ENCODE measurements at regions of chr7 and their contacts with region 1.

Region 1: DNA sequence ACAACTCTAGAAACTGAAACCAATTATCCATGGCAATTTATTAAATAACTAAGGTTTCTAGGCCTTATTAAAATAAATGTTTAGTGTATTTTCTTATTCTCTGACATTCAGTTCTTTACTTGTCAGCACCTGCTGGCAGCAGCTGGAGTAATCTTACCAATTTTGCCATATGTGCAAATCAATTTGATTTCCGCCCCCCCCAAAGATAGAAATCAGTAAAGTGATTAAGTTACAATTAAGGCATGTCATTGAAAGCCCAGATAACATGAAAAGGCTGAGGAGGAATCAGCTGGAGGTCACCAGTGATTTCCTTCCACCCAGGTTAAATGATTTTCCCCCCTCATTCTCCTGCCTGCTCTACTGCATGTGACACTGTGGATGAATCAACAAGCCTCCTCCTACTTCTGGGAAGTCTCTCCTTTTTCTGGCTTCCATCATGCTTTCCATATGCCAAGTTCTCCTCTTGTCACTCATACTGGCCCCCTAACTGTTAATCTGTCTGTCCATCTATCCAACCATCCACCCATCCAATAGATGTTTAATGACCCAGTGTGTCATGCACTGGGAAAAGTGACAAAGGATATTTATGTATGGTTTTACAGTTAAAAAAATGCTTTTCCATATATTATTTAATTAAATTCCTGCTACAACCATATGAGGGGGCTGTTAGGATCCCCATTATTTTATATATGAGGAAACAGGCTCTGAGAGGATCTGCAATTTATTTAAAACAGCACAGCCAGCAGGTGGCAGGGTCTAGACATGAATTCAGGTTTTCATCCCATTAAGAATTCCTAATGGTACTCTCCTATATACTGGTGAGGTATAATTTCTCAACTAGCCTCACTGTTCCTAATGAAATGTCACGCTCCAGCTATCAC is 116.5 kb downstream of the ATXN7L1 start:
- DNase-seq: peak; percentile 18 to 36
- ATAC-seq: peak in 5 of 8 donors; percentile 38 to 73 (median 66)
- H3K4me3 ChIP-seq: no peak overlapping the region
- H3K27ac ChIP-seq: no peak overlapping the region
- H3K4me1 ChIP-seq: peaks cover 0 to 19% (median 0%) of the 10 kb centered on the region in 9 donors
- H3K27me3 ChIP-seq: no peaks in the 10 kb centered on the region
- CTCF ChIP-seq: peak; percentile 41 to 73 (median 66)

Region 2: DNA sequence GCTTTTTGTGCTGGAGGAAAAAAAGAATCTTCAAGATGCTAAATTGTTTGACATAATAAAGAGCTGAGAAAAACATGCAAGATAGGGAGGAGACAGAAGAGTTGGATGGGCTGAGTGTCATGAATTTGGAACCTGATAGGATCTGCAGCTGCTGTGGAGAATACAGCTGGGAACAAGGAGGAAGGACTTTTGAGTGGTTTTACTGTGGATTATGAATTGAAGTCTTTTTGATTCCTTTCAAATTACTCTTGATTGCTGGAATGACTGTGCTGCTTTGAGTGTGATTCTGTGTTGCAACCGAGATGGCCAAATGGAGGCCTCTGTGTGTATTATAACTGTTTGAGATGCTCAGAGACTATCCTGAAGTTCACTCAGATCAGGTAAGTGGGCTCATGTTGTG is 182.7 kb before region 1 on chr7:
- intact Hi-C with region 1: no loop called
- DNase-seq: no peak
- ATAC-seq: no peak
- H3K4me3 ChIP-seq: no peak overlapping the region
- H3K27ac ChIP-seq: no peak overlapping the region
- H3K4me1 ChIP-seq: peaks cover 0 to 8% (median 5%) of the 10 kb centered on the region in 9 donors
- H3K27me3 ChIP-seq: peaks cover 0 to 8% (median 3%) of the 10 kb centered on the region in 7 donors
- CTCF ChIP-seq: no peak

Region 3: DNA sequence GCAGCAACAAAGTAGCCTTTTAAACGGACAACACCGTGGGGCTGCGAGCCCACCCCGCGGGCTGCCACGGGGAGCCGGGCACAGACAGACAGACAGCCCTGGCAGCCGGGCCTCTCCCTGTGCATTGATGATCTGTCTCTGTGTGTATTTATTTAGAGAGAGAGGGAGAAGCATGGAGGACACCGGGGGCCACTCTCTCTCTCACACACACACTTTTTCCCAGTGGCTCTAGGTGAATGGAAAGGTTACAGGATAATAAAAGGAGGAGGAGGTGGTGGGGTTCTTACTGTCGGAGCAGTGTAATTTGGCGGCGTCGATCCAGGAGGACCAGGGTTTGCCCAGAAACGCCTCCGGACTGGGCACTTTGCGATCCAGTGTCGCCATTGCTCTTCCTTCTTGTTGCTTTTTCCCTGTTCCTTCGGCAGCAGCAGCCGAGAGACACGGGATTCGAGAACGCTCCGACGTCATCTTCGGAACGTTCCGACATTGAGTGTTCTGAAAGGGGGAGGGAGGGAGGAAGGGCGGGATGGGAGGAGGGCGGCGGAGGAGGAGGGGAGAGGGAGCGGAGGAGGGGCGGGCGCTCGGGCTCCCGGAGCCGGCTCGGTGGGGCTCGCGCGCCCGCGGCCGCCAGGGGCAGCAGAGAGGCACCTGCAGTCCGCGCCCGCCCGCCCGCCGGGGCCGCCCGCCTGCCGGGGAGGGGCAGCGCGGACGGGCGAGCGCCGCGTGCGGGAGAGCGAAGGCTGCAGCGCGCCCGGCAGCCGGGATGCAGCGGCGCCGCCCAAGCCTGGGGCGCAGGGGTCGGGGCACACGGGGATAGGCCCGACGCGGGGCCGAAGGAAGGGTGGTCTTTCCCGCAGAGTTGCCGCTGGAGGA is 116.4 kb after region 1 on chr7 and contains the start of gene ATXN7L1:
- intact Hi-C with region 1: loop called in 5 of 10 experiments (anchors 1 to 10 kb)
- DNase-seq: peak; percentile 94 to 95
- ATAC-seq: peak; percentile 95 to 98 (median 96)
- H3K4me3 ChIP-seq: peak within 1 kb of the TSS; percentile 67 to 98 (median 80)
- H3K27ac ChIP-seq: peak within 1 kb of the TSS; percentile 34 to 92 (median 78)
- H3K4me1 ChIP-seq: peaks cover 0 to 34% (median 11%) of the 10 kb centered on the region in 9 donors
- H3K27me3 ChIP-seq: peaks cover 0 to 18% (median 0%) of the 10 kb centered on the region in 7 donors
- CTCF ChIP-seq: peak; percentile 29 to 89 (median 58)
- total RNA-seq, gene ATXN7L1: 3.1 to 7.2 (median 5.6) TPM

Region 4: DNA sequence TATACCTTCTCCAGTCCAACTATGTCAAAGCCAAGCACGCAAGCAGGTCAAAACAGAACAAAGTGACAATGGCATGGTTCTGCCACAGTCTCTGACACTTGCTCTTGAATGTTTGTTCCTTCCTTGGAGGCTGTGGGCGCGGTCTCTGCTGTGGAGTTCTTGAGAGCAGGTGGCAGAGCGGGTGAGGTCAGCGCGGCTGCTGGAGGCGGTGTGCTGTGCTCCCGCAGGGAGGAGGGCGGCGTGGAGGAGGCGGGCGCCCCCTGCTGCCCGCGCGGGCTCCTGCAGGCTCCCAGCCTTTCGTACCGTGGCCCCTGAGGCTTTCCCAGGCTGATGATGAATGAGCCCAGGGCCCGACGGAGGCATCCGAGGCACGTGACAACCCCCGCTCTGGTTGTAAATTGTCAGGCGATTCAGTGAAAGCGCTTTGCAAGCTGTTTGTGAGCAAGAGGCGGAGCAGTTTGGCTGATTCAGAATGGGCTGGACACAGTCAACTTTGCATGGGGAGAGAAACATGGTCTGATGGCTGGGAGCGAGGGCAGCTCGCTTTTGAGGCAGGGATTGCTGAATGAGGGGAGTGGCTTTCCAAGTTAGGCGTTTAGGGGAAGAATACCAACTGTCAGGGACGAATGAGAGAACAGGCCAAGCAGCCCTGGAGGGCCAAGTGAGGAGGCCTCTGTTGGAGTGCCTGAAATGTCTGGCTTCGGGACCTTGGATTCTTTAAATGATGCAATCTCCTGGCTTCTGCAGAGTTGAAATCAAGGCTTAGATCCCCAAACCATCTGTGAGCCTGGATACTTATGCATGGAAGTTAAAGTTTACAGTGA is 249.7 kb after region 1 on chr7:
- intact Hi-C with region 1: loop called in 9 of 10 experiments (anchors 1 to 10 kb)
- DNase-seq: peak; percentile 57 to 78
- ATAC-seq: peak; percentile 93 to 98 (median 96)
- H3K4me3 ChIP-seq: peak overlapping the region in 1 of 10 donors; percentile 2
- H3K27ac ChIP-seq: peak overlapping the region in 1 of 10 donors; percentile 6
- H3K4me1 ChIP-seq: peaks cover 0 to 16% (median 5%) of the 10 kb centered on the region in 9 donors
- H3K27me3 ChIP-seq: peaks cover 0 to 3% (median 0%) of the 10 kb centered on the region in 7 donors
- CTCF ChIP-seq: peak; percentile 93 to 98 (median 96)

Region 5: DNA sequence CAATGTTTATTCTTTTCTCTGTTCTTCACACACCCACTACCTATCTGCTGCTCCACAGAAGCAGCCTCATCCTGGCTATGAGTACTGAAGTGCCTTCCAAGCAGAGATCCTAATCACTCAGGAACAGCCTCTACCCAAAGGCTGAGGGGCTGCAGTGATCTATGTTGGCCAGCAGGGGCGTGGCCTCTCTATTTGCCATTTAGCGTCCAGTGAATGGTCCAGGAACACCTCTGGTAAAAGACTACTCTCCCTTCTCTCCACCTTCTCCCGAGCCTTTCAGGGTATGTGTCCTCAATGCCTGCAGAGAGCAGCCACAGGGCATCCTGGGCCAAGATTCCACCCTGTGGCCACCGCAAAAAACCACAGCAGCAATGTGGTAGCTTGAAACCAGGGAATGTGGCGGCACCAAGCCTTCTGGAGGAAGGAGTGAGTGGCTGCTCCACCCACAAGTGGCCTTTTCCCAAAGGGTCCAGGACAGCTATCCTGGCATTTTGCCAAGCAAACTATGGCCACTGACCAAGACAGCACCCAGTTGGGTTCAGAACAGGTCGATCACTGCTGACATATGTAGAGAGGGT is 281.3 kb after region 1 on chr7:
- intact Hi-C with region 1: loop called (anchors 1 to 10 kb)
- DNase-seq: no peak
- ATAC-seq: peak in 2 of 8 donors; percentile 23 to 26
- H3K4me3 ChIP-seq: no peak overlapping the region
- H3K27ac ChIP-seq: no peak overlapping the region
- H3K4me1 ChIP-seq: peaks cover 0 to 21% (median 8%) of the 10 kb centered on the region in 9 donors
- H3K27me3 ChIP-seq: peaks cover 0 to 19% (median 0%) of the 10 kb centered on the region in 7 donors
- CTCF ChIP-seq: peak; percentile 34 to 78 (median 66)

Region 6: GRCh38 chr7:106153891-106154449 is 394.1 kb after region 1 on chr7:
- intact Hi-C with region 1: loop called in 4 of 10 experiments (anchors 5 to 10 kb)
- DNase-seq: peak; percentile 82 to 85
- ATAC-seq: peak; percentile 92 to 99 (median 96)
- H3K4me3 ChIP-seq: peak overlapping the region in 2 of 10 donors; percentile 2 to 23
- H3K27ac ChIP-seq: no peak overlapping the region
- H3K4me1 ChIP-seq: peaks cover 0 to 17% (median 10%) of the 10 kb centered on the region in 9 donors
- H3K27me3 ChIP-seq: peaks cover 0 to 51% (median 0%) of the 10 kb centered on the region in 7 donors
- CTCF ChIP-seq: peak; percentile 91 to 98 (median 96)

Region 7: DNA sequence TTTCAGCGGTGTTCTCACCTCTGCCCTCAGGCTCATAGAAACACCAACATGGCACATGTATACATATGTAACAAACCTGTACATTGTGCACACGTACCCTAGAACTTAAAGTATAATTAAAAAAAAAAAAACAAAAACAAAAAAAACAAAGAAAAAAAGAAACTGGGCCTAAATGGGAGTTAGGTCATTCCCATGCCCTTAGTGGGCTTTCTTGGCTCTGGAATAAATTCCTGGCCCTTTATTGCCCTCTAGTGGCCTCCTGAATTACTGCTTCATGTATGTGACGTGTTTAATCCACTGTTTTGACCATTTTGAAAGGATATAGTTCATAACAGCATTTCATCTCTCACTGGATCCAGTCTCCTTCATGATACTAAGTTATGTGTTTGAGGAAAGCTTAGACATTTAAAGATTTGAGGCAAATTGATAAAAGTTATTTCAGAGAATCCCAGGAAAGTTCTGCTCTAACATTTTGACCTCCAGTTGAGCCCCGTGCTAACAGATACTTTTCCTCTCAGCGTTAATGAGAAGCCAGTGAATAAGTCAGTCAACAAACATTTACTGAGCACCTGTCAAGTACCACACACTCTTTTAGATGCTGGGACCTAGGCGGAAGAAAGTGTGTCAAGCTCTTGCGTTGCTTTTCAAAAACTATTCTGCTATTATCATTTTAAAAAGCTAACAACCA is 406.9 kb after region 1 on chr7:
- intact Hi-C with region 1: loop called in 3 of 10 experiments (anchors 10 kb)
- DNase-seq: peak in 1 of 2 donors; percentile 75
- ATAC-seq: peak in 7 of 8 donors; percentile 59 to 88 (median 78)
- H3K4me3 ChIP-seq: no peak overlapping the region
- H3K27ac ChIP-seq: peak overlapping the region in 6 of 10 donors; percentile 1 to 37 (median 24)
- H3K4me1 ChIP-seq: peaks cover 0 to 23% (median 5%) of the 10 kb centered on the region in 9 donors
- H3K27me3 ChIP-seq: no peaks in the 10 kb centered on the region
- CTCF ChIP-seq: peak; percentile 77 to 90 (median 85)